Thyroid gland (tissue), 4 donors: ENCODE measurements at regions of chr12 and their contacts with region 1.

Region 1: DNA sequence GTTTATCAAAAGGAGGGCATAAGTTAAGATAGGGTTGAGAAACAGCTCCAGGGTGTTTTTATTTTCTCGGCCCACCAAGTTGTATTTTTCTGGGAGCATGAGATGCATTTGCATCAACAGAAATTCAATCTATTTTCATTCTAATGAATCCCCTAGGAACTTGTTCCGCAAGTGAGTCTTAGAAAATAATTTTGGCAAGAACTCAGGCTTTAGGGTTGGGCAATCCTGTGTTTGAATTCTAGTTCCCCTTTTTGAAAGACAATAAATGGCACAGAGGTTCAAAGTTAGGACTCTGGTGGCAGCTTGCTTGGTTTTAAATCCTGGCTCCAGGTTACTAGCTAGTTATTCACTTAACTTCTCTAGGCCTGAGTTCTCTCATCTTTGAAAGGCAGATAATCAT is 23.7 kb downstream of the SLC5A8 start:
- DNase-seq: no peak
- H3K4me3 ChIP-seq: no peak overlapping the region
- H3K27ac ChIP-seq: peak overlapping the region in 2 of 3 donors; percentile 7 to 44
- H3K4me1 ChIP-seq: peaks cover 6 to 8% of the 10 kb centered on the region in 2 donors
- H3K27me3 ChIP-seq: no peaks in the 10 kb centered on the region
- CTCF ChIP-seq: no peak
- POLR2A ChIP-seq: no peak

Region 2: DNA sequence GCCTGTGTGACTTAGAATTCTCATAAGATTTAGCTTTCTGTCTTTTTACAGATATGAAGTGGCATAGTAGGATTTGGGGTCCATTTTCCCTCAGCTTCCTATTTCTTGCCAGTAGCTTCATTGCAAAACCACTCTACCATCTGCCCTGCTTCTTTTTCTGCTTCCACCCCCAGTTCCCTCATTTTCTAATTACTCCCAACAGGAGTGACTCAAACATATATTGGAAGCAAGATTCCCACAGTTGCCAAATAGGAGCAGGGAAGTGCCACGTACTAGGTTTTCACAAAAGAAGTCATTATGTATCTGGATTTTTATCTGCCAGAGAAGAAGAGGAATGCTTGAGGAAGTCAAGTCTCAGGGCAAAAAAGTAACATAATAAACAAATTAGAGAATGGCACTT is 327.6 kb before region 1 on chr12:
- intact Hi-C with region 1: no loop called
- DNase-seq: no peak
- H3K4me3 ChIP-seq: no peak overlapping the region
- H3K27ac ChIP-seq: no peak overlapping the region
- H3K4me1 ChIP-seq: no peaks in the 10 kb centered on the region
- H3K27me3 ChIP-seq: no peaks in the 10 kb centered on the region
- CTCF ChIP-seq: no peak
- POLR2A ChIP-seq: no peak

Region 3: GRCh38 chr12:101277443-101277842 is 91.2 kb after region 1 on chr12:
- intact Hi-C with region 1: loop called (anchors 10 kb)
- DNase-seq: no peak
- H3K4me3 ChIP-seq: no peak overlapping the region
- H3K27ac ChIP-seq: no peak overlapping the region
- H3K4me1 ChIP-seq: peaks cover 0 to 3% of the 10 kb centered on the region in 2 donors
- H3K27me3 ChIP-seq: no peaks in the 10 kb centered on the region
- CTCF ChIP-seq: no peak
- POLR2A ChIP-seq: no peak